IMR-90 (cell line): ENCODE measurements at regions of chr12 and their contacts with region 1.

Region 1: DNA sequence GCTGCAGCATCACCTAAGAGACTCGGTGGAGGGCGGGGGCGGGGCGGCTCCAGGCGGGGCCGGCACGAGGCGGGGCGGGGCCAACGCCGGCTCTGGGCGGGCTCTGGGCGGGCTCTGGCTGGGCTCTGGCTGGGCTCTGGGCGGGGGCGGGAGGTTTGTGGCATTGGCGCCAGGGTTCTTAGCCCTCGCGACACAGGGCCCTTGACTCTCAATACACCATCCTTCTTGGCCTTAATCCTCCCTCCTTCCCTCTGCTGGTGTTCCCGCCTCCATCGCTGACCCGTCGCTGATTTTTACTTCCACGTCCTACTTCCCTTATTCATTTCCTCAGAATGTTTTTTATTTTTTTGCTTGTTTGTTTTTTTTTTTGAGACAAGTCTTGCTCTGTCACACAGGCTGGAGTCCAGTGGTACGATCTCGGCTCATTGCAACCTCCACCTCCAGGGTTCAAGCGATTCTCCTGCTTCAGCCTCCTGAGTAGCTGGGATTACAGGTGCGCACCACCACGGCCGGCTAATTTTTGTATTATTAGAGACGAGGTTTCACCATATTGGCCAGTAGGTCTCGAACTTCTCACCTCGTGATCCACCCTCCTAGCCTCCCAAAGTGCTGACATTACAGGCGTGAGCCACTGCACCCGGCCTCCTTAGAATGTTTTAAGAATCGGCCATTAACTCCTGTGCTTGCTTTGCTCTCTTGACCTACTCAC is at the start of gene BLTP3B:
- DNase-seq: peak; percentile 55
- ATAC-seq: peak; percentile 97
- H3K4me3 ChIP-seq: peak within 1 kb of the TSS; percentile 91
- H3K27ac ChIP-seq: peak within 1 kb of the TSS; percentile 93
- H3K4me1 ChIP-seq: peaks cover 7% of the 10 kb centered on the region
- H3K27me3 ChIP-seq: no peaks in the 10 kb centered on the region
- CTCF ChIP-seq: no peak
- POLR2A ChIP-seq: no peak
- RAD21 ChIP-seq: no peak
- total RNA-seq, gene BLTP3B: 38.7 and 44.7 TPM in 2 replicates

Region 2: GRCh38 chr12:100101000-100101399 is 42.0 kb before region 1 on chr12:
- CTCF ChIA-PET with region 1: no interaction called
- POLR2A ChIA-PET with region 1: no interaction called
- dilution Hi-C with region 1: no loop called
- in situ Hi-C with region 1: no loop called
- intact Hi-C with region 1: no loop called
- DNase-seq: no peak
- ATAC-seq: no peak
- H3K4me3 ChIP-seq: no peak overlapping the region
- H3K27ac ChIP-seq: no peak overlapping the region
- H3K4me1 ChIP-seq: no peaks in the 10 kb centered on the region
- H3K27me3 ChIP-seq: no peaks in the 10 kb centered on the region
- CTCF ChIP-seq: no peak
- POLR2A ChIP-seq: no peak
- RAD21 ChIP-seq: no peak

Region 3: GRCh38 chr12:100128512-100128908 is 14.5 kb before region 1 on chr12:
- CTCF ChIA-PET with region 1: interaction called, 13 read pairs
- POLR2A ChIA-PET with region 1: no interaction called
- dilution Hi-C with region 1: no loop called
- in situ Hi-C with region 1: no loop called
- intact Hi-C with region 1: no loop called
- DNase-seq: peak; percentile 41
- ATAC-seq: peak; percentile 68
- H3K4me3 ChIP-seq: no peak overlapping the region
- H3K27ac ChIP-seq: peak overlapping the region; percentile 89; the same call in 1 of the 2 replicates
- H3K4me1 ChIP-seq: peaks cover 13% of the 10 kb centered on the region
- H3K27me3 ChIP-seq: no peaks in the 10 kb centered on the region
- CTCF ChIP-seq: peak; percentile 40
- POLR2A ChIP-seq: no peak
- RAD21 ChIP-seq: no peak; the same call in 1 of the 2 replicates

Region 4: GRCh38 chr12:100324498-100324897 is 181.5 kb after region 1 on chr12:
- CTCF ChIA-PET with region 1: no interaction called
- POLR2A ChIA-PET with region 1: no interaction called
- dilution Hi-C with region 1: no loop called
- in situ Hi-C with region 1: no loop called
- intact Hi-C with region 1: no loop called
- DNase-seq: no peak
- ATAC-seq: no peak
- H3K4me3 ChIP-seq: no peak overlapping the region
- H3K27ac ChIP-seq: no peak overlapping the region
- H3K4me1 ChIP-seq: peaks cover 8% of the 10 kb centered on the region
- H3K27me3 ChIP-seq: no peaks in the 10 kb centered on the region
- CTCF ChIP-seq: no peak
- POLR2A ChIP-seq: no peak
- RAD21 ChIP-seq: no peak

Region 5: DNA sequence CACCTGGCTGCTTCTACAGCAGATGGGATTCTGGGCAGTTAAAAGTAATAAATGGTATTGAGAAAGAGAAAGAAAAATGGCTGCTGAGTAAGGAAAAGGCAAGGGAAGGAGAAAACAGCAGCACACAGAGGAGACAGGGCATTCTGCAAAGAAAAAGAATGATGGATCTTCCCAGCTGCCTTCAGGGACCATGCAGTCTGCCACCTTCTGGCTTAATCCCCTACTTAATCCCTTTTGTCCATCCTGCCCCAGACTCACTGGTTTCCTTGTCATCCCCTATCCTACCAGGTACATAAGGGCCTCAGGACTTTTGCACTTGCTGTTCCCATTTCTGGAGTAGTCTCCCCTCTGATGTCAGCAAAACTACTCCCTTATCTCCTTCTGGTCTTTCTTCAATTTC is 538.1 kb after region 1 on chr12:
- CTCF ChIA-PET with region 1: no interaction called
- POLR2A ChIA-PET with region 1: no interaction called
- dilution Hi-C with region 1: no loop called
- in situ Hi-C with region 1: no loop called
- intact Hi-C with region 1: no loop called
- DNase-seq: no peak
- ATAC-seq: no peak
- H3K4me3 ChIP-seq: no peak overlapping the region
- H3K27ac ChIP-seq: no peak overlapping the region
- H3K4me1 ChIP-seq: no peaks in the 10 kb centered on the region
- H3K27me3 ChIP-seq: peaks cover 3% of the 10 kb centered on the region; the same call in 1 of the 2 replicates
- CTCF ChIP-seq: no peak
- POLR2A ChIP-seq: no peak
- RAD21 ChIP-seq: no peak